MCF 10A (cell line): ENCODE measurements at regions of chr5 and their contacts with region 1.

Region 1: DNA sequence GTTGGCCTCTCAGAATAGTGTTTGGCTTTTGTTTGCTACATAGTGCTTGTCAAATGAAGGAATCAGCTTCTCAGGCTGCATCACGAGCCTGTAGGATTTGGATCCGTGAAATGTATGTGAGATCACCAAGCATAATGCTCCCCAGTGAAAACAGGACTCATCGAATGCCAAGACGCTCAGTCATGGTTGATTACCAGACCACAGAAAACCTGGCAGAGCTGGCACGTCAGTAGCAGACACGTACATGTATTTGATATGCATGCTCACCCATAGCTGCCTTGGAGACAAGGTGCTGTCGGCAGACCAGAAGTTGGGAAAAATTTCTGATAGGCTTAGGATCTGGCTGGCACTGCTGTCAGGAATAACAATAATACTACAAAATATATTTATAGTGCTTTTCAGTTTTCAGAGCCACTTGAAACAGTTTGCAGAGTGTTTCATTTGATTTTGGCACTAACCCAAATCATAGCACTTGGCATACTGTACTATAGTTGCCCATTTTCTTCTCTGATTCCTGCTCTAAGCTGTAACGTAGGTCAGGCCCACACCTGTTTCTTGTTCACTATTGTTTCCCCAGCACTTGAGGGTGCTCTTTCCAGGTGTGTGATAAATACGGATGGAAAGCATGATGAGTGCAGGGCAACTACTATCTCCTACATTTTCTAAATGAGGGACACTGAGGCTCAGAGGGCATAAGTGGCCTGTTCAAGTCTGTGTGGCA is 226.1 kb downstream of the NR3C1 start:
- DNase-seq: peak; percentile 99
- H3K4me3 Mint-ChIP-seq: no peak overlapping the region
- H3K27ac Mint-ChIP-seq: peak overlapping the region; percentile 86
- H3K4me1 Mint-ChIP-seq: peaks cover 16% of the 10 kb centered on the region
- H3K27me3 Mint-ChIP-seq: no peaks in the 10 kb centered on the region
- CTCF ChIP-seq: no peak

Region 2: DNA sequence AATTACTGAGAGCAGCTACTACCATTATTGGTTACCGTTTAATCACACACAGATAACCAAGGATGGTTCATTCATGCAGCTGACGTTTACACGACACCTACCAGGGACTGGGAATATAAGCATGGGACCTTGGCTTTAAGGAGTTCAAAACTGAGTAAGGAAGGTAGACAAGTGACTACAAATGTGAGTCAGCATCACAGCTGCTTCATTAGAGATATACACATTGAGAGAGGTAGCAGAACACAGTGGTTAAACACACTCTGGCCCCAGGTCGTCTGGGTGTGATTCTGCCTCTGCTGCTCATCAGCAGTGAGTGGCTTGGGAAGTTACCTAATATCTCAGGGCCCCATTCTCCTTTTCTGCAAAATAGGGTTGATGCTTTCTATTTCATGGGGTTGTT is 42.5 kb before region 1 on chr5:
- CTCF ChIA-PET with region 1: no interaction called
- POLR2A ChIA-PET with region 1: interaction called, 14 read pairs
- intact Hi-C with region 1: no loop called
- DNase-seq: no peak
- H3K4me3 Mint-ChIP-seq: no peak overlapping the region
- H3K27ac Mint-ChIP-seq: no peak overlapping the region
- H3K4me1 Mint-ChIP-seq: peaks cover 32% of the 10 kb centered on the region
- H3K27me3 Mint-ChIP-seq: no peaks in the 10 kb centered on the region
- CTCF ChIP-seq: no peak

Region 3: DNA sequence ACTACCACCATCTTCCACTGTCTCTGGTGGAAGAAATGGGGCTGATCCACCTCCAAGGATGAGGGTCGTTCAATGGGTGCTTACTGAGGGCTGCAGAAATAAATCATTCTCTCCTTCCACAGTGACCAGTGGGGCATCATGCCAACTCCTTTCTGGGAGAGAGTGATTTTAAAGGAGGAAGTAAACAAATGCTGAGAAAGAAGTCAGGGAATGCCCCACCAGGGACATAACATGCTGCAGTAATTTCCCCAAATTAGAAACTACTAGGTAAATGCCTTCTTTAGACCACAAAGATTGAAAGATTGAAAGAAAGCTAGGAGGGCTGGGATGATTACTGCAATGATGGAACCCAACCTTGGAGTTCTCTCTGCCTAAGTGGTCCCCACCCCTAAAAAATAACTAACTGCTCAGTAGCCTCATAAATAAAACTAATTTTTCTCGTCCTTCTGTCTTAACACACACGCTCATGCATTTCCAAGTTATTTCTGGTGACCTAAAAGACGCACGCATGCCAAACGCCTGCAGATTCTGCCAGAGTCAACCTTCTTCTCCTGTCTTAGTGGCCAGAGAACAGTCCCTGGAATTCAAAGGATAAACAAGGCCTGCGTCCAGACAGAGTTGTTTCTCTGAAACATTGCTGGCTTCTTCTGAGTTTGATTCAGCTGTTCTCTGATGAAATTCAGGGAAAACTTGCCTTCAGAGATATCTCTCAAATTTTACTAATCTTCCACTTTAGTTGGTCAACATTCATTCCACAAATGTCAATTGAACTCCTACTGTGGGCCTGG is 23.9 kb before region 1 on chr5:
- CTCF ChIA-PET with region 1: interaction called, 5 read pairs
- POLR2A ChIA-PET with region 1: interaction called, 11 read pairs
- intact Hi-C with region 1: no loop called
- DNase-seq: no peak
- H3K4me3 Mint-ChIP-seq: no peak overlapping the region
- H3K27ac Mint-ChIP-seq: peak overlapping the region; percentile 96
- H3K4me1 Mint-ChIP-seq: peaks cover 43% of the 10 kb centered on the region
- H3K27me3 Mint-ChIP-seq: no peaks in the 10 kb centered on the region
- CTCF ChIP-seq: no peak

Region 4: GRCh38 chr5:143161893-143162540 is 15.4 kb before region 1 on chr5:
- CTCF ChIA-PET with region 1: interaction called, 5 read pairs
- POLR2A ChIA-PET with region 1: interaction called, 25 read pairs
- intact Hi-C with region 1: no loop called
- DNase-seq: peak; percentile 96
- H3K4me3 Mint-ChIP-seq: no peak overlapping the region
- H3K27ac Mint-ChIP-seq: peak overlapping the region; percentile 25
- H3K4me1 Mint-ChIP-seq: peaks cover 38% of the 10 kb centered on the region
- H3K27me3 Mint-ChIP-seq: no peaks in the 10 kb centered on the region
- CTCF ChIP-seq: no peak

Region 5: GRCh38 chr5:143195491-143195890 is 18.1 kb after region 1 on chr5:
- CTCF ChIA-PET with region 1: interaction called, 5 read pairs
- POLR2A ChIA-PET with region 1: interaction called, 19 read pairs
- intact Hi-C with region 1: no loop called
- DNase-seq: peak; percentile 80
- H3K4me3 Mint-ChIP-seq: no peak overlapping the region
- H3K27ac Mint-ChIP-seq: peak overlapping the region; percentile 60
- H3K4me1 Mint-ChIP-seq: peaks cover 35% of the 10 kb centered on the region
- H3K27me3 Mint-ChIP-seq: no peaks in the 10 kb centered on the region
- CTCF ChIP-seq: no peak

Region 6: GRCh38 chr5:143244000-143244736 is 66.7 kb after region 1 on chr5:
- CTCF ChIA-PET with region 1: interaction called, 5 read pairs
- POLR2A ChIA-PET with region 1: interaction called, 25 read pairs
- intact Hi-C with region 1: loop called (anchors 1 kb)
- DNase-seq: peak; percentile 98
- H3K4me3 Mint-ChIP-seq: peak overlapping the region; percentile 54
- H3K27ac Mint-ChIP-seq: peak overlapping the region; percentile 84
- H3K4me1 Mint-ChIP-seq: peaks cover 61% of the 10 kb centered on the region
- H3K27me3 Mint-ChIP-seq: no peaks in the 10 kb centered on the region
- CTCF ChIP-seq: no peak